ENCODE measurements at regions of chr2 and their contacts with region 1.

Region 1: GRCh38 chr2:27133905-27134780 is at the start of gene PREB:
- DNase-seq: peak; percentile 96
- H3K4me3 Mint-ChIP-seq: peak within 1 kb of the TSS; percentile 91
- H3K27ac Mint-ChIP-seq: peak within 1 kb of the TSS; percentile 92
- H3K4me1 Mint-ChIP-seq: peaks cover 11% of the 10 kb centered on the region
- H3K27me3 Mint-ChIP-seq: no peaks in the 10 kb centered on the region
- CTCF ChIP-seq: no peak
- total RNA-seq, gene PREB: 55.1 and 68.5 TPM in 2 replicates

Region 2: DNA sequence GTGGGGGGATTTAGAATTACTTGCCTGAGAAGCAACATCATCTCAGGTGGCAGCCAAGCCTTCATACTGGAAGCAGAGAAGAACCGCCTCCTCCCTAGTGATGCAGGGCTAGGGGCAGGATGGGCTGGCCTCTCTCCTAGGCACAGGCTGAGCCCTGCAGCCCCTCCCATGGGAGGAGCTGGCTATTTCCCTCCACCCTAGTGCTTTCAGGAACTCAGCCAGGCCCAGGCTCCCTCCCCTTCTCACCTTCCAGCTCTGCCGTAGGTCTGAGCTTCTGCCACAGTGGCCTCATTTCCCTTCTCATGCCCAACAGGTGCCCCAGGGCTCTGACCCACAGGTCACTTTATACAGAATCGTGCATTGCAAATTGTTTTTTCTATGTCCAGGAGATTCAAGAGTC is 317.2 kb before region 1 on chr2:
- CTCF ChIA-PET with region 1: no interaction called
- POLR2A ChIA-PET with region 1: no interaction called
- intact Hi-C with region 1: no loop called
- DNase-seq: peak; percentile 45
- H3K4me3 Mint-ChIP-seq: no peak overlapping the region
- H3K27ac Mint-ChIP-seq: no peak overlapping the region
- H3K4me1 Mint-ChIP-seq: no peaks in the 10 kb centered on the region
- H3K27me3 Mint-ChIP-seq: peaks cover 53% of the 10 kb centered on the region
- CTCF ChIP-seq: no peak

Region 3: DNA sequence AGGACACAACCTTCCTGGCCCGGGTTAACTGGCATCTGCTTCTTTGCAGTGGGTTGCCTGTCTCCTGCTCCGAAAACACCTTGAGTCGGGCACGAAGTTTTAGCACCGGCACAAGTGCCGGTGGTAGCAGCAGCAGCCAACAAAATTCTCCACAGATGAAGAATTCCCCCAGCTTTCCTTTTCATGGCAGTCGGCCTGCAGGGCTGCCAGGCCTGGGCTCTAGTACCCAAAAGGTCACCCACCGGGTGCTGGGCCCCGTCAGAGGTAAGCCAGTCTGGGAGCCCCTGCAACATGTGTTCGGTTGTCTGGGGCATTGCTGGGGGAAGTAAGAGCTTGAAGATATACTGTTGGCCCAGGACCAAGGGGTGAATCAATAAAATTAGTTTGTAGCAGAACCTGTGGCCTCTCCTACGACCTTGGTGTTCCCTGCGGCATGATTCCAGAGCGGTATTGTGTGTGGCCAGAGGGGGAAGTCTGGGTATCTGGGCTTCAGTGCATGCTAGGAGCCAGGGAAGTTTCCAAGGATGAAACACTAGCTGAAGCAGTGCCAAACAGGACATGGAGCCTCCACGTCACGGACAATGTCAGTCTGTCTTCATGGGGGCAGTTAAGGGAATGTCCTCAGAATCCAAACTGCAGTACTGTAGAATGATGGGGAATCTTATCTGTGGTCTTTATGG is 74.9 kb before region 1 on chr2:
- CTCF ChIA-PET with region 1: no interaction called
- POLR2A ChIA-PET with region 1: no interaction called
- intact Hi-C with region 1: no loop called
- DNase-seq: no peak
- H3K4me3 Mint-ChIP-seq: no peak overlapping the region
- H3K27ac Mint-ChIP-seq: no peak overlapping the region
- H3K4me1 Mint-ChIP-seq: no peaks in the 10 kb centered on the region
- H3K27me3 Mint-ChIP-seq: no peaks in the 10 kb centered on the region
- CTCF ChIP-seq: no peak

Region 4: GRCh38 chr2:27191053-27191829 is 57.1 kb after region 1 on chr2:
- CTCF ChIA-PET with region 1: interaction called, 6 read pairs
- POLR2A ChIA-PET with region 1: interaction called, 7 read pairs
- intact Hi-C with region 1: loop called (anchors 5 kb)
- DNase-seq: peak; percentile 81
- H3K4me3 Mint-ChIP-seq: no peak overlapping the region
- H3K27ac Mint-ChIP-seq: no peak overlapping the region
- H3K4me1 Mint-ChIP-seq: no peaks in the 10 kb centered on the region
- H3K27me3 Mint-ChIP-seq: peaks cover 11% of the 10 kb centered on the region
- CTCF ChIP-seq: peak; percentile 39

Region 5: DNA sequence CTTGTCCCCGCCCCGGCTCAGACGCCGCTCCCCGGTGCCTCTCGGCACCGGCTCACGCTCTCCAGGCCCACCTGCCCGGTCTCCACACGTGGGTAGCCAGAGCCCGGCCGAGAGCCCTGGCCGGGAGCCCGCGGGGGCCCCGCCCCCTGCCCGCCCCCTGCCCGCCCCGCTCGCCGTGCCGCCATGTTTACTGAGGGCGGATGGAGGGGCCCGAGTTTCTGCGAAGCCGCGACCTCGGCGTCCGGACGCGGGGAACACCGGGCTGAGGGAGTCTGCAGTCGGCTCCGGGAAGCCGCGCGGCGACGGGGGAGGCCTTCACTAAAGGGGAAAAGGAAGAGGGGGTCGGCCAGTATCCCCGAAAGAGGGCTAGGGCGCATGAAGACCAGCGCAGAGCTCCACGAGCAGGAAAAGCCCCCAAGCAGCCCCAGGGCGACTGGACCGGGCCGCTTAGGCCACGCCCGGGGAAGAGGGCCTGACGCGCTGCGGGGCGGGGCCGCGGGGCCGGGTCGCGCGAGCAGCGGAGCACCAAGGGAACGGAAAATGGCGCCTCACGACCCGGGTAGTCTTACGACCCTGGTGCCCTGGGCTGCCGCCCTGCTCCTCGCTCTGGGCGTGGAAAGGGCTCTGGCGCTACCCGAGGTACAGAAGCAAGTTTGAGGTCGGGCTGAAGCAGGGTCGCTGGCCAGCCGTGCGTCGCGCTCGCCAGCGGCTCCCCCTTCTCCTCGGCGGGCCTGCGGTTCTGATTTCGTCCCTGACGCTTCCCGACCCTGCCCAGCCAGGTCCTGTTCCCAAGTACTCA is 77.9 kb after region 1 on chr2 and contains the starts of genes ATRAID and SLC5A6:
- CTCF ChIA-PET with region 1: interaction called, 3 read pairs
- POLR2A ChIA-PET with region 1: interaction called, 20 read pairs
- intact Hi-C with region 1: no loop called
- DNase-seq: peak; percentile 87
- H3K4me3 Mint-ChIP-seq: peak within 1 kb of the TSS; percentile 86
- H3K27ac Mint-ChIP-seq: peak within 1 kb of the TSS; percentile 99
- H3K4me1 Mint-ChIP-seq: peaks cover 21% of the 10 kb centered on the region
- H3K27me3 Mint-ChIP-seq: no peaks in the 10 kb centered on the region
- CTCF ChIP-seq: no peak
- total RNA-seq, gene ATRAID: 115 and 122 TPM in 2 replicates
- total RNA-seq, gene SLC5A6: 25.9 and 26.9 TPM in 2 replicates